ENCODE measurements at regions of chr15 and their contacts with region 1.

Region 1: DNA sequence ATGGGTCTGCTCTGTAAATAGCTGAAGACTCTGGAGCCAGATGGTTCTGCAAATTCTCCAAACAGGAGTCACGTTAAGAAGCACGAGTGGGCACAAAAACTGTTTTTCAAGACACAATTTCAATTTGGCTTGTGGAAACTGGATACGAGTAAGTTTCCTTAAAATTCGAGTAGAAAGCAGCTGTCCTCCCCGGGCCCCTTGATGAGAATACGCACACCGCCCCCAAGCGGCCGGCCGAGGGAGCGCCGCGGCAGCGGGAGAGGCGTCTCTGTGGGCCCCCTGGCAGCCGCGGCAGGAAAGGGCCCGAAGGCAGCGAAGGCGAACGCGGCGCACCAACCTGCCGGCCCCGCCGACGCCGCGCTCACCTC is 778 bp upstream of the THBS1 start:
- DNase-seq: peak; percentile 97
- H3K4me3 ChIP-seq: peak overlapping the region; percentile 41 to 77 (median 70)
- H3K27ac ChIP-seq: peak overlapping the region; percentile 89 to 97 (median 96)
- H3K4me1 ChIP-seq: peaks cover 0 to 58% (median 50%) of the 10 kb centered on the region in 4 donors
- H3K27me3 ChIP-seq: no peaks in the 10 kb centered on the region
- CTCF ChIP-seq: peak; percentile 83 to 99 (median 92)
- EP300 ChIP-seq: peak in 2 of 4 donors; percentile 9 to 31
- POLR2A ChIP-seq: no peak

Region 2: DNA sequence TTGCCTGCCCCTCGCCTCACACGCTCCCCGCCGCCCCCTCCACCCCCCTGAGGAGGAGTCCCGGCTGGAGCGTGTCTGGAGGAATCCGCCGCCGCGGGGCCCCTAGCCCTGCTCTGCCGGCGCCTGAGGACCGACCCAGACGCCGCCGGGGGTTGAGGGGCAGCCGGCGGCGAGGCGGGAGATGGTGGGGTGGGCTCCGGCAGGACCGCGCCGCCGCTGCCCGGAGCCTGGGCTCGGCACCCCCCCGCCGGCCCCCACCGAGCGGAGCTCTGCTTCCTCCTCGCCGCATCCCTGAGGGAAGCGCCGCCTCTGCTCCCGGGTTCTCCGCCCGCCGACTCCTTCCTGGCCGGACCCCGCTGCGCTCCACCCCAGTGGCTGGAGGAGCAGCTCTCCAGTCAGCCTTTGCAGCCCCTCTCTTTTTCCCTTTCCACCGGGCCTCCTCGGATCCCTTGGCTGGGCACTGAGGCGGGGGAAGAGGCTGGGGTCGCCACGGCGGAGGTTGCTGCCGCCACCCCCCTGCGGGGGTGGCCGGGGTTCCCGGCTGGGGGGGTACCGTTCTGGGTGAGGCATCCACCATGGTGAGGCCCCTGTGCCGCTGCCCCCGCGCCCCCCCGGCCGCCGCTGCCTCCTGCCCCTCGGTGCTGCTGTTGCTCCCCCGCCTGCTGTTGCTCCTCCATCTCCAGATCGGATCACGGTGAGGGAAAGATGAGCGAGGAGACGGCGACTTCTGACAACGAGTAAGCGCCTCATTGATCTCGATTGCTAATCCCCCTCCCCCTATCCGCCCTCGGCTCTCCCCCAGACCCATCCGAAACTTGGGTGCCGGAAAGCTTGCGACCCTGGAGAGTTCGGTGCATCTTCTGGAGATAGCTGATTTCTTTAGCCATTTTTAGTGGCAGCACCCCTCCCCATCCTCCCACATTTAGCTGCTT is 1327.4 kb before region 1 on chr15 and contains the start of gene SPRED1:
- intact Hi-C with region 1: loop called (anchors 5 kb)
- DNase-seq: peak; percentile 90
- H3K4me3 ChIP-seq: peak within 1 kb of the TSS; percentile 89 to 98 (median 93)
- H3K27ac ChIP-seq: peak within 1 kb of the TSS; percentile 98 to 100 (median 99)
- H3K4me1 ChIP-seq: peaks cover 0 to 36% (median 19%) of the 10 kb centered on the region in 4 donors
- H3K27me3 ChIP-seq: no peaks in the 10 kb centered on the region
- CTCF ChIP-seq: no peak
- EP300 ChIP-seq: no peak
- POLR2A ChIP-seq: no peak
- total RNA-seq, gene SPRED1: 13.3 to 17.8 (median 15.1) TPM

Region 3: DNA sequence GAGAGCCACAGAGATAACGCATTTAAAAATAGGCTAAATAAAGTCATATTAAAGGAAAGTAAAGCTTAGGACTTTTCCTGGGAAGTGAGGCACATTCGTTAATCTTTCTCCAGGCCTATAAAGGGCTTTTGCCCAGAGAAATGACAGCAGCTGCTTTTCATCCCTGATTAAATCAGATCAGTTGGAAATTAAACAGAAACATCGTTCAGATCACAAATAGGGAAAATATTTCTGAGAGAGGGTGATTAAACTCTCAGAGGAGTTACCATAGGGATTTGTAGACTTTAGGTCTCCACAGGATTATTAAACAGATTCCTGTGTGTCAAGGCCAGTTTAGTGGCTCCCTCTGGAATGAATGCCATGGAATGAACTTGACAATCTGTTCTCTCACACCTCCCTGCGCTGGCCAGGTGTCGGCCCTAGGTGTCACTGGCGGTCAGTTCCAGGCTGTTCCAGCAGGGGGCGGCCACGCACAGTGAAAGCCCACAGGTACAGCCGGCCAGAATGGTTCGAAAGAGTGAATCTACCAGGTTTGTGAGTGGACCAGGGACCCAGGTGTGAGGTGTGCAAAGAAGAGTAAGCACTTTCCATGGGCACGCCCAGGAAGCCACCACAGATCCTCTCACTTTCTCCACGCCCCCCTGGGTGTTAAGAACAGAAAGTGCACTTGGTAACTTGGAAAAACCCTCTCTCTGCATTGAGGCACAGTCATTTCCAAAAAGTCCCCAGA is 762.5 kb before region 1 on chr15:
- intact Hi-C with region 1: loop called (anchors 2 kb)
- DNase-seq: peak; percentile 89
- H3K4me3 ChIP-seq: no peak overlapping the region
- H3K27ac ChIP-seq: peak overlapping the region in 1 of 4 donors; percentile 35
- H3K4me1 ChIP-seq: peaks cover 0 to 12% (median 6%) of the 10 kb centered on the region in 4 donors
- H3K27me3 ChIP-seq: no peaks in the 10 kb centered on the region
- CTCF ChIP-seq: peak; percentile 98 to 100 (median 99)
- EP300 ChIP-seq: no peak
- POLR2A ChIP-seq: no peak

Region 4: GRCh38 chr15:39171944-39172368 is 408.1 kb before region 1 on chr15:
- intact Hi-C with region 1: loop called (anchors 1 kb)
- DNase-seq: peak; percentile 82
- H3K4me3 ChIP-seq: no peak overlapping the region
- H3K27ac ChIP-seq: peak overlapping the region; percentile 73 to 78 (median 73)
- H3K4me1 ChIP-seq: peaks cover 0 to 39% (median 31%) of the 10 kb centered on the region in 4 donors
- H3K27me3 ChIP-seq: no peaks in the 10 kb centered on the region
- CTCF ChIP-seq: peak in 3 of 4 experiments; percentile 16 to 45 (median 22)
- EP300 ChIP-seq: no peak
- POLR2A ChIP-seq: no peak

Region 5: GRCh38 chr15:39391230-39391629 is 188.9 kb before region 1 on chr15:
- intact Hi-C with region 1: loop called (anchors 5 kb)
- DNase-seq: peak; percentile 91
- H3K4me3 ChIP-seq: no peak overlapping the region
- H3K27ac ChIP-seq: peak overlapping the region in 3 of 4 donors; percentile 30 to 74 (median 47)
- H3K4me1 ChIP-seq: peaks cover 0 to 29% (median 15%) of the 10 kb centered on the region in 4 donors
- H3K27me3 ChIP-seq: no peaks in the 10 kb centered on the region
- CTCF ChIP-seq: no peak
- EP300 ChIP-seq: peak in 3 of 4 donors; percentile 3 to 81 (median 54)
- POLR2A ChIP-seq: no peak

Region 6: GRCh38 chr15:39488516-39488915 is 91.6 kb before region 1 on chr15:
- intact Hi-C with region 1: loop called (anchors 5 kb)
- DNase-seq: peak; percentile 93
- H3K4me3 ChIP-seq: no peak overlapping the region
- H3K27ac ChIP-seq: peak overlapping the region; percentile 69 to 89 (median 84)
- H3K4me1 ChIP-seq: peaks cover 3 to 77% (median 68%) of the 10 kb centered on the region in 4 donors
- H3K27me3 ChIP-seq: no peaks in the 10 kb centered on the region
- CTCF ChIP-seq: no peak
- EP300 ChIP-seq: peak; percentile 65 to 92 (median 69)
- POLR2A ChIP-seq: no peak